CD4-positive, alpha-beta memory T cell (primary cell): ENCODE measurements at regions of chr6 and their contacts with region 1.

Region 1: DNA sequence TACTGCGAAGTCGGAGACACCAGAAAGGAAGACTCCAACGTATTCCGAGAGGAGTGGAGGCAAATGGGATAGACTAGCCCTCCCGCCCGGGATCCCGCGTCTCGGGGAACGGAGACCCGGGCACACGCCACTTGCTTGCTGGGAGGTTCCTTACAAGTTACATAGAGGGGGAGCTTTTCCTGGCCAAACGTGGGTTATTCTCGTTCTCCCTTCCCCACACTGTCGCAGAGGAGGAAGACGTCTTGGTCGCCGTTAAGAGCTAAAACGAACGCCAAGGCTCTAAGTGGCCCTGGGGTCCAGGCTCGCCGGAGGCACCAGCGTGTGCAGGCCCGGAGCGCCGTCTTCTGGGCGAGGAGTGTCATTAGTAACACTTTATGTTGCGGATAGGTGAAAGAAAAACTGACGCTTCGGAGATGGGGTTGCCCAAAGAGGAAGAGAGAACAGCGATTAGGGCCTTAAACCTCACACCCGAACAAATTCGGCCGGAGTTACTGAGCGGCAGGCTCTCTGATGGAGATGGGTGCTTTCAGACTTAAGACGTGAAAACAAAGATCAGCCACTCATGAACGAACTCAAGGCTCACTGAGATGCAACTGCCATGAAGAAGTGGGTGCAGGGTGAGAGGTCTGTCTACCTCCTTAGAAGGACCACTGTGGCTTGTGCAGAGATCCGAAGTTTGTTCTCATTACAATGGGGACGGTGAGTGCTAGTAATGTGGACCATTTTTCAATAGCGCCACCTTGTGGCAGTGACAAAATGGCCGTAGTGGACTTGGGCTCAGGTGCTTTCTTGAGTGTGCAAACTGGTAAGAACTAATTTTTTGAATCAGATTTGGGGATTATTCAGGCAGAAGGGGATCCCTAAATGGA is 11.7 kb upstream of the ZNF311 start:
- DNase-seq: peak; percentile 79 to 82 (median 81)
- H3K4me3 ChIP-seq: peak overlapping the region; percentile 55 to 58
- H3K4me3 Mint-ChIP-seq: peak overlapping the region; percentile 85 to 97 (median 90)
- H3K27ac ChIP-seq: peak overlapping the region; percentile 9
- H3K27ac Mint-ChIP-seq: peak overlapping the region; percentile 70 to 92 (median 82)
- H3K4me1 ChIP-seq: peaks cover 10% of the 10 kb centered on the region
- H3K4me1 Mint-ChIP-seq: peaks cover 10 to 21% (median 15%) of the 10 kb centered on the region in 4 donors
- H3K27me3 ChIP-seq: no peaks in the 10 kb centered on the region
- H3K27me3 Mint-ChIP-seq: peaks cover 7 to 11% of the 10 kb centered on the region in 2 donors

Region 2: GRCh38 chr6:28683944-28684538 is 332.8 kb before region 1 on chr6:
- CTCF ChIA-PET with region 1: interaction called, 27 read pairs
- POLR2A ChIA-PET with region 1: no interaction called
- intact Hi-C with region 1: loop called (anchors 1 kb)
- DNase-seq: peak in 4 of 5 donors; percentile 35 to 52 (median 44)
- H3K4me3 ChIP-seq: no peak overlapping the region
- H3K4me3 Mint-ChIP-seq: peak overlapping the region in 5 of 8 donors; percentile 14 to 76 (median 66)
- H3K27ac ChIP-seq: no peak overlapping the region
- H3K27ac Mint-ChIP-seq: peak overlapping the region in 1 of 7 donors; percentile 38
- H3K4me1 ChIP-seq: peaks cover 15% of the 10 kb centered on the region
- H3K4me1 Mint-ChIP-seq: peaks cover 9 to 21% (median 17%) of the 10 kb centered on the region in 4 donors
- H3K27me3 ChIP-seq: peaks cover 16% of the 10 kb centered on the region
- H3K27me3 Mint-ChIP-seq: peaks cover 38 to 49% of the 10 kb centered on the region in 2 donors

Region 3: GRCh38 chr6:28923318-28924102 is 93.3 kb before region 1 on chr6 and contains the start of gene TRIM27:
- CTCF ChIA-PET with region 1: interaction called, 19 read pairs
- POLR2A ChIA-PET with region 1: interaction called, 6 read pairs
- intact Hi-C with region 1: loop called (anchors 1 kb)
- DNase-seq: peak; percentile 76 to 84 (median 78)
- H3K4me3 ChIP-seq: peak within 1 kb of the TSS; percentile 82 to 91
- H3K4me3 Mint-ChIP-seq: peak within 1 kb of the TSS; percentile 92 to 98 (median 95)
- H3K27ac ChIP-seq: peak within 1 kb of the TSS; percentile 82
- H3K27ac Mint-ChIP-seq: peak within 1 kb of the TSS; percentile 86 to 96 (median 94)
- H3K4me1 ChIP-seq: peaks cover 46% of the 10 kb centered on the region
- H3K4me1 Mint-ChIP-seq: peaks cover 30 to 49% (median 41%) of the 10 kb centered on the region in 4 donors
- H3K27me3 ChIP-seq: no peaks in the 10 kb centered on the region
- H3K27me3 Mint-ChIP-seq: peaks cover 0 to 2% of the 10 kb centered on the region in 2 donors
- total RNA-seq, gene TRIM27: 102 to 108 TPM

Region 4: GRCh38 chr6:28981833-28982475 is 34.8 kb before region 1 on chr6:
- CTCF ChIA-PET with region 1: interaction called, 15 read pairs
- POLR2A ChIA-PET with region 1: interaction called, 6 read pairs
- intact Hi-C with region 1: loop called (anchors 2 kb)
- DNase-seq: peak; percentile 79 to 87 (median 84)
- H3K4me3 ChIP-seq: peak overlapping the region; percentile 99
- H3K4me3 Mint-ChIP-seq: peak overlapping the region; percentile 87 to 95 (median 94)
- H3K27ac ChIP-seq: no peak overlapping the region
- H3K27ac Mint-ChIP-seq: peak overlapping the region; percentile 84 to 100 (median 95)
- H3K4me1 ChIP-seq: peaks cover 28% of the 10 kb centered on the region
- H3K4me1 Mint-ChIP-seq: peaks cover 37 to 65% (median 46%) of the 10 kb centered on the region in 4 donors
- H3K27me3 ChIP-seq: no peaks in the 10 kb centered on the region
- H3K27me3 Mint-ChIP-seq: peaks cover 14 to 24% of the 10 kb centered on the region in 2 donors

Region 5: GRCh38 chr6:28988536-28989311 is 28.1 kb before region 1 on chr6:
- CTCF ChIA-PET with region 1: interaction called, 15 read pairs
- POLR2A ChIA-PET with region 1: interaction called, 4 read pairs
- intact Hi-C with region 1: loop called (anchors 2 kb)
- DNase-seq: peak; percentile 69 to 77 (median 70)
- H3K4me3 ChIP-seq: peak overlapping the region; percentile 17 to 34
- H3K4me3 Mint-ChIP-seq: peak overlapping the region; percentile 76 to 89 (median 83)
- H3K27ac ChIP-seq: no peak overlapping the region
- H3K27ac Mint-ChIP-seq: peak overlapping the region in 5 of 7 donors; percentile 41 to 84 (median 72)
- H3K4me1 ChIP-seq: peaks cover 11% of the 10 kb centered on the region
- H3K4me1 Mint-ChIP-seq: peaks cover 18 to 40% (median 24%) of the 10 kb centered on the region in 4 donors
- H3K27me3 ChIP-seq: no peaks in the 10 kb centered on the region
- H3K27me3 Mint-ChIP-seq: peaks cover 10 to 16% of the 10 kb centered on the region in 2 donors

Region 6: GRCh38 chr6:29236060-29236459 is 219.3 kb after region 1 on chr6:
- CTCF ChIA-PET with region 1: no interaction called
- POLR2A ChIA-PET with region 1: no interaction called
- intact Hi-C with region 1: no loop called
- DNase-seq: no peak
- H3K4me3 ChIP-seq: no peak overlapping the region
- H3K4me3 Mint-ChIP-seq: peak overlapping the region in 1 of 8 donors; percentile 18
- H3K27ac ChIP-seq: no peak overlapping the region
- H3K27ac Mint-ChIP-seq: no peak overlapping the region
- H3K4me1 ChIP-seq: no peaks in the 10 kb centered on the region
- H3K4me1 Mint-ChIP-seq: no peaks in the 10 kb centered on the region
- H3K27me3 ChIP-seq: no peaks in the 10 kb centered on the region
- H3K27me3 Mint-ChIP-seq: peaks cover 15 to 23% of the 10 kb centered on the region in 2 donors

Region 7: GRCh38 chr6:29589423-29590048 is 572.7 kb after region 1 on chr6:
- CTCF ChIA-PET with region 1: interaction called, 6 read pairs
- POLR2A ChIA-PET with region 1: no interaction called
- intact Hi-C with region 1: loop called (anchors 2 kb)
- DNase-seq: peak; percentile 48 to 57 (median 51)
- H3K4me3 ChIP-seq: no peak overlapping the region
- H3K4me3 Mint-ChIP-seq: no peak overlapping the region
- H3K27ac ChIP-seq: no peak overlapping the region
- H3K27ac Mint-ChIP-seq: no peak overlapping the region
- H3K4me1 ChIP-seq: no peaks in the 10 kb centered on the region
- H3K4me1 Mint-ChIP-seq: peaks cover 0 to 1% (median 0%) of the 10 kb centered on the region in 4 donors
- H3K27me3 ChIP-seq: peaks cover 15% of the 10 kb centered on the region
- H3K27me3 Mint-ChIP-seq: peaks cover 8 to 34% of the 10 kb centered on the region in 2 donors